HEK293 (cell line): ENCODE measurements at regions of chr1 and their contacts with region 1.

Region 1: DNA sequence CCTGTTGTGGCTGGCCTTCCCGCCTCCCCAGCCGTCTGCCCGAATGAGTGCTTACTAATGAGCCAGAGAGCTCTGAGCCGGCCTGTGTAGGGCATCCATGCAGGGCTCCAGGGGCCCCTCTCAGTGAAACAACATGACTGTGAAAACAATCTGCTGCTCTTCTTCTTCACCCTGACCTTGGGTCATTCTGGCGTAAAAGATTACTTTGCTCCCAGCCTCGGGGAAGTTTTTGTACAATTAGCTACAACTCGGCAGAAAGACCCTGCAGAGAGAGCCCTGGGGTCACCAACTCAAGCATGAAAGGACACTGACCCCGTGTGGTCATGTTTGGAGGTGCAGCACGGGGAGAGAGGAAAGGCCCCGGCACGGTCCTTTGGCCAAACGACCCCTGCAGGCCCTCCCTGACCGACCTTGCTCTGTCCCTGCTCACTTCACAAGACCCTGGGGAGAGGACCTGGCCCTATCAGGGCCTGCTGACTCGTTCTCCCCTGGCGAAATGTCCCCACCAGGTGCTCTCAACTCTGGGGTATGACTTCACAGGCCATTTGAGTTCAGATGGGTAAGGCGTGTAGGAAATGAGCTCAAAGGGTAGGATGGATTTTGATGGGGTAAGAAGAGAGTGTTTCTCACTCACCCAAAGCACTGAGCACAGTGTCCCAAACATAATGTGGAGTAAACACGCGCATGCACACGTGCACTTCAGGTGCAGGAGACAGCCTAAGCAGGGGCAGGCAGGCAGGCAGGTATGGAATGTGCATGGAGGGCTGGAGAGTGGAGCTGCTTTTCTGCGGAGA is 22.9 kb upstream of the FAM20B start:
- H3K4me3 ChIP-seq: no peak overlapping the region
- H3K27ac ChIP-seq: no peak overlapping the region
- H3K4me1 ChIP-seq: no peaks in the 10 kb centered on the region
- CTCF ChIP-seq: peak; percentile 88

Region 2: GRCh38 chr1:178300352-178300699 is 702.4 kb before region 1 on chr1:
- CTCF ChIA-PET with region 1: interaction called, 17 read pairs
- POLR2A ChIA-PET with region 1: interaction called, 3 read pairs
- H3K4me3 ChIP-seq: no peak overlapping the region
- H3K27ac ChIP-seq: no peak overlapping the region
- H3K4me1 ChIP-seq: peaks cover 3% of the 10 kb centered on the region; the same call in 1 of the 2 replicates
- CTCF ChIP-seq: no peak

Region 3: GRCh38 chr1:178532392-178532791 is 470.4 kb before region 1 on chr1:
- CTCF ChIA-PET with region 1: interaction called, 20 read pairs
- POLR2A ChIA-PET with region 1: interaction called, 3 read pairs
- H3K4me3 ChIP-seq: no peak overlapping the region
- H3K27ac ChIP-seq: no peak overlapping the region
- H3K4me1 ChIP-seq: no peaks in the 10 kb centered on the region; the same call in 1 of the 2 replicates
- CTCF ChIP-seq: peak; percentile 77

Region 4: GRCh38 chr1:178548107-178548506 is 454.6 kb before region 1 on chr1:
- CTCF ChIA-PET with region 1: interaction called, 34 read pairs
- POLR2A ChIA-PET with region 1: no interaction called
- H3K4me3 ChIP-seq: no peak overlapping the region
- H3K27ac ChIP-seq: no peak overlapping the region
- H3K4me1 ChIP-seq: no peaks in the 10 kb centered on the region
- CTCF ChIP-seq: no peak

Region 5: GRCh38 chr1:178614286-178614685 is 388.5 kb before region 1 on chr1:
- CTCF ChIA-PET with region 1: no interaction called
- POLR2A ChIA-PET with region 1: no interaction called
- H3K4me3 ChIP-seq: no peak overlapping the region
- H3K27ac ChIP-seq: no peak overlapping the region
- H3K4me1 ChIP-seq: no peaks in the 10 kb centered on the region
- CTCF ChIP-seq: no peak

Region 6: GRCh38 chr1:178774263-178774662 is 228.5 kb before region 1 on chr1:
- CTCF ChIA-PET with region 1: interaction called, 87 read pairs
- POLR2A ChIA-PET with region 1: no interaction called
- H3K4me3 ChIP-seq: no peak overlapping the region
- H3K27ac ChIP-seq: no peak overlapping the region
- H3K4me1 ChIP-seq: no peaks in the 10 kb centered on the region
- CTCF ChIP-seq: 0 out of 2 replicates have a peak, but pooled peaks have one; percentile 8

Region 7: DNA sequence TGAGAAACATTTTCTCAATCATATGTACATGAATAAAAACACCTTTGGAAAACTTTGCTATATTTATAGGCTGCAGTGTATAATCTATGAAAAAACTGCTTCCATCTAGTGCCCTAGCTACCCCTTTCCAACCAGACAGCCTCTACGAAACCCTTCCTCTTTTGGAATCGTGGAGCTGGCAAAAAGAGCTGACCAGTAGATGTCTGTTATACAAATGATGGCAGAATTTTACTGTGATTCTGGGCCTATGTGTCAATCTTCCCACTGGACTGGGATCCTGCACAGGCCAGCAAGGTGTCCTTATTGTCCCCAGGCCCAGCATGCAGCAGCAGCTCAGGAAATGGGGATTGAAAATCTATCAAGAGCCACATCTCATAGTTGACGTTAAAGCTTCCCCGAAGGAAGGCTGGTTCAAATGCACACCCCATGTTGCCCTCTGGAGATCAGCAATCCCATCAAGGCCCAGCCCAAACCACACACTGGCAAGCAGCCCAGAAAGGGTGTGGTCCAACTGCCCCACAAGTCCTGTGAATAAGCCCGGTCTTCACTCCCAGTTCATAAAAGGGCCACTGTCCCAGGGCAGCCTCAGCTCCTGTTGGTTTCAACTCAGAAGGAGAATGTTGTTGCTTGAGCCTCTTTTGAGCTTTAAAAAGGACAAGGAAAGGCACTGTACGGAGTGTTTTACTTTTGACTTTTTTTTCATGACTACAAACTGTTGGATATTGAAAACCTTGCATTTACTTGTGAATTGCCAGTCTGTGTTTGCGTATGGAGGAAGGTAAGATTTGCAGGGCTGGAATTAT is 14.2 kb after region 1 on chr1:
- CTCF ChIA-PET with region 1: interaction called, 18 read pairs
- POLR2A ChIA-PET with region 1: interaction called, 6 read pairs
- H3K4me3 ChIP-seq: no peak overlapping the region
- H3K27ac ChIP-seq: no peak overlapping the region; the same call in 1 of the 2 replicates
- H3K4me1 ChIP-seq: peaks cover 7% of the 10 kb centered on the region
- CTCF ChIP-seq: no peak

Region 8: DNA sequence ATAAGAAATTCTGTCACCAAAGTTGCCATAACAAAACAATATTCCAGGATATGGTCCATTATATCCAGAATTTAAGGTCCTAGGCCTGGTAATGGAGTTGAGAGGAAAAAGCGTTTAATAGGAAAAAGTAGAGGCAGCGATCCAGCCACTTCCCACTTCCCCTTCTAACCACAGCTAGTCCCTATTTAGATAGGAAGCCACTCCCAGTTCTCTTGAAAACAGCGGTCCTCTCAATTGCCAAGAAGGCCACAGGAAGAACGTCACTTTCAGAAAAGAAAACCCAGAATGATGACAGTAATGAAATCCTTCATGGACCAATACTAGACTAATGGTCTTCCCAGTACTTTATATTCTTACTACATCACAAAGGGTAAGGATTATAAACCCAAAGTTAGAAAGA is 188.1 kb after region 1 on chr1:
- CTCF ChIA-PET with region 1: no interaction called
- POLR2A ChIA-PET with region 1: no interaction called
- H3K4me3 ChIP-seq: no peak overlapping the region
- H3K27ac ChIP-seq: no peak overlapping the region
- H3K4me1 ChIP-seq: peaks cover 18% of the 10 kb centered on the region
- CTCF ChIP-seq: no peak